ENCODE measurements at regions of chr2 and their contacts with region 1.

Region 1: GRCh38 chr2:146661473-146662096 is 1183.2 kb upstream of the ACVR2A start:
- DNase-seq: no peak
- ATAC-seq: no peak
- H3K4me3 ChIP-seq: no peak overlapping the region
- H3K4me3 Mint-ChIP-seq: no peak overlapping the region
- H3K27ac ChIP-seq: no peak overlapping the region
- H3K27ac Mint-ChIP-seq: no peak overlapping the region
- H3K4me1 ChIP-seq: no peaks in the 10 kb centered on the region
- H3K4me1 Mint-ChIP-seq: no peaks in the 10 kb centered on the region
- H3K27me3 ChIP-seq: no peaks in the 10 kb centered on the region
- H3K27me3 Mint-ChIP-seq: no peaks in the 10 kb centered on the region
- CTCF ChIP-seq: no peak

Region 2: GRCh38 chr2:146193619-146194018 is 468.0 kb before region 1 on chr2:
- CTCF ChIA-PET with region 1: no interaction called
- POLR2A ChIA-PET with region 1: no interaction called
- intact Hi-C with region 1: no loop called
- DNase-seq: no peak
- ATAC-seq: no peak
- H3K4me3 ChIP-seq: no peak overlapping the region
- H3K4me3 Mint-ChIP-seq: no peak overlapping the region
- H3K27ac ChIP-seq: no peak overlapping the region
- H3K27ac Mint-ChIP-seq: no peak overlapping the region
- H3K4me1 ChIP-seq: no peaks in the 10 kb centered on the region
- H3K4me1 Mint-ChIP-seq: no peaks in the 10 kb centered on the region
- H3K27me3 ChIP-seq: no peaks in the 10 kb centered on the region
- H3K27me3 Mint-ChIP-seq: no peaks in the 10 kb centered on the region
- CTCF ChIP-seq: no peak

Region 3: GRCh38 chr2:146477383-146477782 is 184.2 kb before region 1 on chr2:
- CTCF ChIA-PET with region 1: no interaction called
- POLR2A ChIA-PET with region 1: no interaction called
- intact Hi-C with region 1: no loop called
- DNase-seq: no peak
- ATAC-seq: no peak
- H3K4me3 ChIP-seq: no peak overlapping the region
- H3K4me3 Mint-ChIP-seq: no peak overlapping the region
- H3K27ac ChIP-seq: no peak overlapping the region
- H3K27ac Mint-ChIP-seq: no peak overlapping the region
- H3K4me1 ChIP-seq: no peaks in the 10 kb centered on the region
- H3K4me1 Mint-ChIP-seq: no peaks in the 10 kb centered on the region
- H3K27me3 ChIP-seq: no peaks in the 10 kb centered on the region
- H3K27me3 Mint-ChIP-seq: no peaks in the 10 kb centered on the region
- CTCF ChIP-seq: no peak

Region 4: GRCh38 chr2:146572598-146572997 is 89.0 kb before region 1 on chr2:
- CTCF ChIA-PET with region 1: no interaction called
- POLR2A ChIA-PET with region 1: no interaction called
- intact Hi-C with region 1: no loop called
- DNase-seq: no peak
- ATAC-seq: no peak
- H3K4me3 ChIP-seq: no peak overlapping the region
- H3K4me3 Mint-ChIP-seq: no peak overlapping the region
- H3K27ac ChIP-seq: no peak overlapping the region
- H3K27ac Mint-ChIP-seq: no peak overlapping the region
- H3K4me1 ChIP-seq: no peaks in the 10 kb centered on the region
- H3K4me1 Mint-ChIP-seq: no peaks in the 10 kb centered on the region
- H3K27me3 ChIP-seq: no peaks in the 10 kb centered on the region
- H3K27me3 Mint-ChIP-seq: no peaks in the 10 kb centered on the region
- CTCF ChIP-seq: no peak

Region 5: GRCh38 chr2:146604521-146604920 is 57.1 kb before region 1 on chr2:
- CTCF ChIA-PET with region 1: no interaction called
- POLR2A ChIA-PET with region 1: no interaction called
- intact Hi-C with region 1: loop called in 1 of 2 experiments (anchors 1 kb)
- DNase-seq: no peak
- ATAC-seq: no peak
- H3K4me3 ChIP-seq: no peak overlapping the region
- H3K4me3 Mint-ChIP-seq: no peak overlapping the region
- H3K27ac ChIP-seq: no peak overlapping the region
- H3K27ac Mint-ChIP-seq: no peak overlapping the region
- H3K4me1 ChIP-seq: no peaks in the 10 kb centered on the region
- H3K4me1 Mint-ChIP-seq: no peaks in the 10 kb centered on the region
- H3K27me3 ChIP-seq: no peaks in the 10 kb centered on the region
- H3K27me3 Mint-ChIP-seq: no peaks in the 10 kb centered on the region
- CTCF ChIP-seq: no peak

Region 6: DNA sequence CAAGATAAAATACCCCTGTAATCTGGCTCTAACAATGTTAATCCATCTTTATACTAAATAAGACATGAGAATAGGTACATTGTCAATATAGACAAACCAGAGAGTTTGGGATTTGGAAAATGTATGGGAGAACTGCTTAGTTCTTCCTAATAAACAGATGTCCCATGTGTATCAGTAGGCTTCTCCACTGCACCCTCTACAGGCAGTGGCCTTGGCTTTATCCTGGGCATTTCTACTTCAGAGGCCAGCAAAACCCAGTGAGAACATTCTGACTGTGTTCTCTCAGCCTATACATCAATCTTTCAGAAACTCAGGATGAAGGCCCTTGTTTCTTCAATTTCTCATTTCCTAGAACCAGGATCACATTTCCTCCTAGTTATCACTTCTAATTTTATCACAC is 15.7 kb after region 1 on chr2:
- CTCF ChIA-PET with region 1: no interaction called
- POLR2A ChIA-PET with region 1: no interaction called
- intact Hi-C with region 1: loop called in 1 of 2 experiments (anchors 1 kb)
- DNase-seq: no peak
- ATAC-seq: no peak
- H3K4me3 ChIP-seq: no peak overlapping the region
- H3K4me3 Mint-ChIP-seq: no peak overlapping the region
- H3K27ac ChIP-seq: no peak overlapping the region
- H3K27ac Mint-ChIP-seq: no peak overlapping the region
- H3K4me1 ChIP-seq: no peaks in the 10 kb centered on the region
- H3K4me1 Mint-ChIP-seq: no peaks in the 10 kb centered on the region
- H3K27me3 ChIP-seq: no peaks in the 10 kb centered on the region
- H3K27me3 Mint-ChIP-seq: no peaks in the 10 kb centered on the region
- CTCF ChIP-seq: no peak